PC-3 (cell line): ENCODE measurements at regions of chr11 and their contacts with region 1.

Region 1: DNA sequence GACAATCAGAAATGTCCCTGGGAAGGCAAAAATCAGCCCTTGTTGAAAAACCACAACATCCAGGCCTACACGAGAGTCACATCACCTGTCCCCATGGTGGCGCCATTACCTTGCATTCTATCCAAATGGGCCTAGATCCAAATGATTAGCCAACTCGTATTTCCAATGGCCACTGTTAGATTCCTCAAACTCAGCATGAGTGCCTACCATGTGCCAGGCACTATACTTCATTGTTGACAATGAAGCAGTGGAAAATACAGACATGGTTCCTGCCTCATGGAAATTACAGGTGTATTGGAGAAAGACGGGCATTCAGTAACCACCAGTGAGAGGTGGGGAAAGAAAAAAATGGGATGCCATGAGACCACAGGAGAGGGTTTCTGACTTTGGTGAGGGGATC is 29.8 kb upstream of the CREB3L1 start:
- DNase-seq: peak; percentile 77
- ATAC-seq: peak; percentile 7; the same call in 1 of the 2 replicates
- H3K4me3 ChIP-seq: no peak overlapping the region
- H3K27ac ChIP-seq: peak overlapping the region; percentile 68; the same call in 1 of the 2 replicates
- H3K4me1 ChIP-seq: peaks cover 30% of the 10 kb centered on the region
- H3K27me3 ChIP-seq: no peaks in the 10 kb centered on the region
- CTCF ChIP-seq: peak; percentile 75

Region 2: DNA sequence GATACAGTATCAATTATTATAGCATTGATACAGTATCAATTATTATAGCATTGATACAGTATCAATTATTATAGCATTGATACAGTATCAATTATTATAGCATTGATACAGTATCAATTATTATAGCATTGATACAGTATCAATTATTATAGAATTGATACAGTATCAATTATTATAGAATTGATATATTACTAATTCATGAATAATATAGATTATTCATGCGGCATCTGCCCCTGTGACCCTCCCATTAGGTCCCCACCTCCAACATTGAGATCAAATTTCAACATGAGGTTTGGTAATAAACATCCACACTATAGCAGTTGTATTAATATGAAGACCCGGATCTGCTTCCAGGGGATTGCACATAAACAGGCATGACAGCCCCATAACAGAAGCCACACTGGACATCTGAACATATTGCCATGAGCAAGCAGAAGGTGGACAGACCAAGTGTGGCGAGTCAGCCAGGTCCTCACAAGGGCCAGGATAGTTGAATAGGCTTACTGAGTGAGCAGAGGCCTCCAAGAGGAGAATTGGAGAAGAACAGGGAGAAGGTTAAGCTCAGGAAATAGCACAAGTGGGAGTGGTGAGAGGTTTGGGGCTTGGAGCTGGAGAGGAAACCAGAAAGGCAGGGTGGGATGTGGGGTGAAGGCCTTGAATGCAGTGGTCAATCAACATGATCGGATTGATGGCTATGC is 432.1 kb before region 1 on chr11:
- CTCF ChIA-PET with region 1: no interaction called
- POLR2A ChIA-PET with region 1: no interaction called
- intact Hi-C with region 1: no loop called
- DNase-seq: peak; percentile 34
- ATAC-seq: peak; percentile 88
- H3K4me3 ChIP-seq: no peak overlapping the region
- H3K27ac ChIP-seq: no peak overlapping the region
- H3K4me1 ChIP-seq: no peaks in the 10 kb centered on the region
- H3K27me3 ChIP-seq: no peaks in the 10 kb centered on the region
- CTCF ChIP-seq: no peak

Region 3: DNA sequence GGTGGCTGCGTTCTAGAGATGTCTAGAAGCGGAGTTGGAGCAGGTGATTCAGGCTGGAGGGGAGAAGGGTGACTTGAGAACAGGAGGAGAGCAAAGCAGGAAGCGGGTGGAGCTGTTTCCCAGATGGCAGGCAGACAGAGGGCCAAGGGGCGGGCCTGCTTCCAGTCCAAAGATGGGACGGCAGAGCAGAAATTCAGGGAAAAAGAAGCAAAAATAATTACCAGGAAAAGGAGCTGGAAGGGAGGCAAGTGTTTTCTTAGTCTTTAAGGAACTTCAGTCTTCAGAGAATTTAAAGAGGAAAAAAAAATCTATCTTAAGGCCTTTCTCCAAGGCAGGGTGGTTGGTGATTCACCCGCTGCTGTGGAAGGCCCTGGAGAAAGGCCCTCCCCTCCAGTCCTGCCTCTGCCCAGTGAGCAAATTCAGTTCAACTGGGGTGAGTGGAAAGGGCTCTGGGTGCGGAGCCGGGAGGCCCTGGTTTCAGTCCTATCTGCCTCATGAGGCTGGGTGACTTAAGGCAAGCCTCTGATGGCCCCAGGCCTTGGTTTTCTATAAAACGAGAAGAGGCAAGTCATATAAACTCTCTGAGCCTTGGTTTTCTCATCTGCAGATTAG is 25.3 kb after region 1 on chr11:
- CTCF ChIA-PET with region 1: interaction called, 3 read pairs
- POLR2A ChIA-PET with region 1: interaction called, 8 read pairs
- intact Hi-C with region 1: loop called (anchors 1 kb)
- DNase-seq: peak; percentile 56
- ATAC-seq: peak; percentile 60
- H3K4me3 ChIP-seq: no peak overlapping the region; the same call in 1 of the 2 replicates
- H3K27ac ChIP-seq: peak overlapping the region; percentile 69
- H3K4me1 ChIP-seq: peaks cover 29% of the 10 kb centered on the region
- H3K27me3 ChIP-seq: peaks cover 6% of the 10 kb centered on the region
- CTCF ChIP-seq: no peak

Region 4: DNA sequence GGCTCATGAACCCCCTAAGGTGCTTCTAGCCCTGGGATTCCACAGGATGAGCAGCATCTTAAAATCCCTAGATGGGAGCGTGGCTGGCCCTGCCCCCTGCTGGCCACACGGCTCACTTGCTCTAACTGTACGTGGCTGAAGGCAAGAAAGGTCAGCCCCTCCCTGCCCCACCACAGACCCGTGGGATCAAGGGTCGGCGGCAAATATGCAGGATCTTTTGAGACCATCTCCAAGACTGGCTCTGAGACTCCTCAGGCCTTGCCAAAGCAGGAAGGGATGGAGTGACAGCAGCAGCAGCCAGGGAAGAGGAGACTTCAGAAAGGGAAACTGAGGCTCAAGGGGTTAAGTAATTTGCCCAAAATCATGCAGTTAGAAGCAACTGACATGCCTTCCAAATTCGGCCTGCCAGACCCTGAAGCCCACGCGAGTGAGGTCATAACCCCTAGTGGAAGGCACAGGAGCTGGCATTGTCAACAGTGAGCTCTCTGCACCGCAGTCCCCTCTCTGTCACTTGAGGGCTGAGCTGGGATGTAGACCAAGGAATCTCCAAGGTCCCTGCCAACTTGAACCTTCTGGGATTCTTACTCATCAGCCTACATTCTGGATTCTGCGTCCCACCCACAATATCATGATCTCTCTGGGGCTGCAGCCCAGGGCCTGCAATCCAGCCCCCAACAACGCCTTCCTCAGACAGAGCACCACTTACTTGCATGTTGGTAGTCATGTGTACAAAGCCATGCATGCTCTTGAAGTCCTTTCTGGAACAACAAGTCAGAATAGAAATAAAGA is 61.2 kb after region 1 on chr11:
- CTCF ChIA-PET with region 1: interaction called, 6 read pairs
- POLR2A ChIA-PET with region 1: interaction called, 11 read pairs
- intact Hi-C with region 1: loop called (anchors 1 kb)
- DNase-seq: peak; percentile 70
- ATAC-seq: peak; percentile 79
- H3K4me3 ChIP-seq: no peak overlapping the region
- H3K27ac ChIP-seq: no peak overlapping the region
- H3K4me1 ChIP-seq: peaks cover 8% of the 10 kb centered on the region; the same call in 1 of the 2 replicates
- H3K27me3 ChIP-seq: no peaks in the 10 kb centered on the region
- CTCF ChIP-seq: peak; percentile 92

Region 5: DNA sequence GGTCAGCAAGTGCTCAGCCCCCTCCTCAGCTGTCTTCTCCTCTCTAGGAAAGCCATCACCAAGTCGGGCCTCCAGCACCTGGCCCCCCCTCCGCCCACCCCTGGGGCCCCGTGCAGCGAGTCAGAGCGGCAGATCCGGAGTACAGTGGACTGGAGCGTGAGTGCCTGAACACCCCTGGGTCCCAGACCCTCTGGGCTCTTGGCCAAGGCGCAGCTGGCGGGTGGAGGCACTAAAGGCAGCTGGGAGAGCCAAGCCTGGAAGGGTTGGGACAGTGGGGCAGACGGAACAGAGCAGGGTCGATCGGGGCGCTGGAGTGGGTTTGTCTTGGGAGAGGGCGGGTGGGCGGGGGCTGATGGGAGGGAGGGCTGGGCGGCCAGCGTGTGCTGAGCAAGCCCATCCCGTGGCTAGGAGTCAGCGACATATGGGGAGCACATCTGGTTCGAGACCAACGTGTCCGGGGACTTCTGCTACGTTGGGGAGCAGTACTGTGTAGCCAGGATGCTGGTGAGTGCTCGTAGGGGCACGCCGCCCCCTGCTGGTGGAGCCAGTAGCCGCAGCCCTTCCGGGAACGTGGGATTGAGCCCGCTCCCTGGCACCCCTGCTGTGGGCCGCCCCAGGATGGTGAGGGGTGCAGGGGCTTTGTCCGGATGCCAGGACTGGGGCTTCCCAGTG is 119.7 kb after region 1 on chr11:
- CTCF ChIA-PET with region 1: interaction called, 3 read pairs
- POLR2A ChIA-PET with region 1: no interaction called
- intact Hi-C with region 1: loop called (anchors 5 kb)
- DNase-seq: peak; percentile 39
- ATAC-seq: no peak
- H3K4me3 ChIP-seq: no peak overlapping the region
- H3K27ac ChIP-seq: no peak overlapping the region
- H3K4me1 ChIP-seq: peaks cover 22% of the 10 kb centered on the region
- H3K27me3 ChIP-seq: no peaks in the 10 kb centered on the region
- CTCF ChIP-seq: peak; percentile 62